Mammary epithelial cell (primary cell): ENCODE measurements at regions of chr12 and their contacts with region 1.

Region 1: GRCh38 chr12:129409281-129409680 is 494.5 kb downstream of the TMEM132D start:
- DNase-seq: no peak
- H3K4me3 ChIP-seq: no peak overlapping the region
- H3K27ac ChIP-seq: no peak overlapping the region
- H3K4me1 ChIP-seq: no peaks in the 10 kb centered on the region
- H3K27me3 ChIP-seq: no peaks in the 10 kb centered on the region
- CTCF ChIP-seq: no peak

Region 2: DNA sequence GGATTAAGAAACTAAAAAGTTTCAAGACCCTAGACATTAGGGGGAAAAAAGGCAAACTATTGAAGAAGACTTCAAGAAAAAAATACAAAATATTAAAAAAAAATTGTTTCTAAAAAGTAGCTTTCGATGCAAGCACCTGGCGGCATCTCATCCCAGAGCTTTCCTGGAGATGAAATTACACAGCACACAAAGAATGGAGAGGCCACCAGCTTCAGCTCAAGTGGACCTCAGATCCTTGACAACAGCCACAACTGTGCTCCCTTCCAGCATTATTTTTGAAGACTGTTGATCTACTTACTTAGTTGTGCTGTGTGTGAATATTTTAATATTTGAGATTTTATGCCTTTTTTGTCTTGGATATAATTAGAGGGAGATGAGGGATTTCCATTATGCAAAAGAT is 77.0 kb before region 1 on chr12:
- CTCF ChIA-PET with region 1: no interaction called
- dilution Hi-C with region 1: loop called (anchors 5 kb)
- in situ Hi-C with region 1: no loop called
- intact Hi-C with region 1: no loop called
- DNase-seq: no peak
- H3K4me3 ChIP-seq: no peak overlapping the region
- H3K27ac ChIP-seq: no peak overlapping the region
- H3K4me1 ChIP-seq: no peaks in the 10 kb centered on the region
- H3K27me3 ChIP-seq: no peaks in the 10 kb centered on the region
- CTCF ChIP-seq: no peak

Region 3: GRCh38 chr12:129772501-129773493 is 363.5 kb after region 1 on chr12:
- CTCF ChIA-PET with region 1: no interaction called
- dilution Hi-C with region 1: no loop called
- in situ Hi-C with region 1: no loop called
- intact Hi-C with region 1: no loop called
- DNase-seq: no peak
- H3K4me3 ChIP-seq: no peak overlapping the region
- H3K27ac ChIP-seq: no peak overlapping the region
- H3K4me1 ChIP-seq: no peaks in the 10 kb centered on the region
- H3K27me3 ChIP-seq: no peaks in the 10 kb centered on the region
- CTCF ChIP-seq: no peak